GM10248 (cell line): ENCODE measurements at regions of chr10 and their contacts with region 1.

Region 1: GRCh38 chr10:121823993-121824463 is 103.8 kb downstream of the ATE1 start:
- DNase-seq: peak; percentile 48
- CTCF ChIP-seq: peak; percentile 41

Region 2: GRCh38 chr10:121804460-121804859 is 19.6 kb before region 1 on chr10:
- CTCF ChIA-PET with region 1: interaction called, 35 read pairs
- POLR2A ChIA-PET with region 1: no interaction called
- DNase-seq: no peak
- CTCF ChIP-seq: no peak

Region 3: DNA sequence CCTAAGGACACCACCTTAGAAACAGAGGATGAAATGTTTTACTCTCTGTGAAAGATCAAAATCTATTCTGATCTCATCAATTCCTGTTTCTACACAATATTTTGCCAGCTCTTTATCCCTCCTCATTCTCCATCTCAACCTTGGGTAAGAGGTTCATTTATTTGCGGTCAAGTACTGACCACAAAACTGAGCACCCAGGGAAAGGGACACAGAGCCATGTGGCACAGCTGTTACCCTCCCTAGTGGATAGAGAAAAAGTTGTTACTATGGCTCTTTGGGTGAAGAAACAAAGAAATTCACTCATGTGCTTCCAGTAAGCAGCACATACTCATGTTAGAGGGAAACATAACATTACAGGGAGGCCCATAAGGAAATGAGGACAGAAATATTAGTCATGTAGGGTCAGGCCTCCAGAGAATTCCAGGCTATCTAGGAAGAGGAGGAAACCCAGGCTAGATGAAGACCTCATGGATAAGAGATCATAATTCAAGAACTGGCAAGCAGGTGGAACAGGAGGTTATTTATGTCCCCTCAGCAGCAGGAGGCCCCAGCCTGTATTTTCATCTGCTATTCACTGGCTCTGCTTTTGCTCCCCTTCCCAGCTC is 10.7 kb before region 1 on chr10:
- CTCF ChIA-PET with region 1: interaction called, 24 read pairs
- POLR2A ChIA-PET with region 1: no interaction called
- DNase-seq: no peak
- CTCF ChIP-seq: no peak

Region 4: GRCh38 chr10:121886997-121887622 is 63.1 kb after region 1 on chr10:
- CTCF ChIA-PET with region 1: interaction called, 22 read pairs
- POLR2A ChIA-PET with region 1: no interaction called
- DNase-seq: peak; percentile 62
- CTCF ChIP-seq: peak; percentile 54

Region 5: GRCh38 chr10:121999318-121999717 is 175.3 kb after region 1 on chr10:
- CTCF ChIA-PET with region 1: no interaction called
- POLR2A ChIA-PET with region 1: no interaction called
- DNase-seq: no peak
- CTCF ChIP-seq: no peak

Region 6: GRCh38 chr10:122044045-122044661 is 220.1 kb after region 1 on chr10:
- CTCF ChIA-PET with region 1: no interaction called
- POLR2A ChIA-PET with region 1: no interaction called
- DNase-seq: no peak
- CTCF ChIP-seq: no peak